ENCODE measurements at regions of chr1 and their contacts with region 1.

Region 1: DNA sequence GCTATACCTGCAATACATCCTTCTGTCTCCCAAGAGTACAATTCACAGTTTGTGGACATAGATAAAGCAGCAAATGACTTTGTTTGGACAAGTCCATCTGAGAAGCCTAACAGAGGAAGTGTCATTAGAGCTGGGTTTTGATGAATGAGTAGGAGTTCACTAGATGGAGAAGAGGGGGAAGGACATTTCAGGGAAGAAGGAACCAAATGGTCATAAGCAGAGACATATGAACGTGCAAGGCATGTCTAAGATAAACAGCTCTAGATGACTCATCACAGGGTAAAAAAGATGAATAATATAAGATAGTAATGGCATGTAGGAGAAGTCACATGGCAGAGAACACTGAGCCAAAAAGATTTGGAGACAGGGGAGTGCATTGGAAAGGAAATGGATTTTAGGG is 54.5 kb downstream of the HMGB4 start:
- DNase-seq: no peak
- ATAC-seq: no peak
- H3K4me3 ChIP-seq: no peak overlapping the region
- H3K4me3 Mint-ChIP-seq: no peak overlapping the region
- H3K27ac ChIP-seq: no peak overlapping the region
- H3K27ac Mint-ChIP-seq: no peak overlapping the region
- H3K4me1 ChIP-seq: no peaks in the 10 kb centered on the region
- H3K4me1 Mint-ChIP-seq: no peaks in the 10 kb centered on the region
- H3K27me3 ChIP-seq: no peaks in the 10 kb centered on the region
- H3K27me3 Mint-ChIP-seq: no peaks in the 10 kb centered on the region
- CTCF ChIP-seq: no peak

Region 2: DNA sequence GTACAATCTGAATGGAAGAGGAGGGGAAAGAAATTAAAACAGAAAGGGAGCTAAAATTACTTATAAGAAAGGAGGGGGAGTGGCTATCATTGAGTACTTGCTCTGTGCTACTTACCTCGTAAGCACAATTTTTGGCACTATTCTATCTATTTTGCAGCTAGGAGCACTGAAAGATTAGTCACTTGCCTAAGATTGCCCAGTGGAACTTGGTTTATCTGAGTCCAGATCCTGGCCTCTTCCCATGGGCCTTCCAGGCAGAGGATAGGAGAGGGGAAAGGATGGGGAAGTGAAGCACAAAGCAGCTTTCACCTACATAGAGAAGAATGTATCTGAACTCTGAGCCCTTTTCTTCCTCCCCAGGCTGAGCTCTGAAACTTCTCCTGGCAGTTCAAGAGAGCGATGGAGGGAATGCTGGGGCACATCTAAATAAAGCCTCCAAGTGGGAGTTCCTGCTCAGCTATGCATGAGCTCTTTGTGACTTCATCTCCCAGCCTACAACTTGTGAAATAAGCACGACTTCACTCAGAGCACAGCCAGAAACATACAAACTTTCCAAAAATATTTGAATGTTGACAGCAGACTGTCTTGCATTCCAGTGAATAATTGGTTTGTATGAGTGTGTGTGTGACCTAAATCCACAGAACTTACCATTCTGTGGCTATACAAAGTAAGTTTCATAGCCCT is 25.1 kb before region 1 on chr1:
- CTCF ChIA-PET with region 1: no interaction called
- POLR2A ChIA-PET with region 1: no interaction called
- intact Hi-C with region 1: no loop called
- DNase-seq: no peak
- ATAC-seq: no peak
- H3K4me3 ChIP-seq: no peak overlapping the region
- H3K4me3 Mint-ChIP-seq: no peak overlapping the region
- H3K27ac ChIP-seq: no peak overlapping the region
- H3K27ac Mint-ChIP-seq: no peak overlapping the region
- H3K4me1 ChIP-seq: no peaks in the 10 kb centered on the region
- H3K4me1 Mint-ChIP-seq: no peaks in the 10 kb centered on the region
- H3K27me3 ChIP-seq: no peaks in the 10 kb centered on the region
- H3K27me3 Mint-ChIP-seq: peaks cover 6% of the 10 kb centered on the region
- CTCF ChIP-seq: no peak

Region 3: DNA sequence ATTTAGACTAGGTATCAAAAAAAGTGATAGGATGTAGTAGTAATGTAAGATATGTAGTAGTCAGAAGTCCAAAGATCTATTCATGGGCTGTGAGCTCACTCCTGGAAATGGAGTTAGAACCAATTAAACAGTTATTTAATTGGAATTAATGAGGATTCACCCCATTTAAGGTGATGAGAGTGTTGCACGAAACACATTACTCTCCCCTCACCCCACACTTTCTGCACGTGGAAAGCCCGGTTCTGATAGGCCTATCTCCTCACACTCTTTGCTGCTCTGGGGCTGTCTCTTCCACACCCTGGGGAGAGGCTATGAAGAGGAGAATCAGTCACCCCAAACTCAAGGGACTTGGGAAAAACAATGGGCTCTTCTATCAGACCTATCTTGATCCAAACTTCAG is 71.9 kb after region 1 on chr1:
- CTCF ChIA-PET with region 1: no interaction called
- POLR2A ChIA-PET with region 1: interaction called, 11 read pairs
- intact Hi-C with region 1: no loop called
- DNase-seq: no peak
- ATAC-seq: no peak
- H3K4me3 ChIP-seq: no peak overlapping the region
- H3K4me3 Mint-ChIP-seq: no peak overlapping the region
- H3K27ac ChIP-seq: no peak overlapping the region
- H3K27ac Mint-ChIP-seq: no peak overlapping the region
- H3K4me1 ChIP-seq: no peaks in the 10 kb centered on the region
- H3K4me1 Mint-ChIP-seq: no peaks in the 10 kb centered on the region
- H3K27me3 ChIP-seq: no peaks in the 10 kb centered on the region
- H3K27me3 Mint-ChIP-seq: peaks cover 18% of the 10 kb centered on the region
- CTCF ChIP-seq: no peak

Region 4: GRCh38 chr1:34188418-34188817 is 270.1 kb after region 1 on chr1:
- CTCF ChIA-PET with region 1: no interaction called
- POLR2A ChIA-PET with region 1: no interaction called
- intact Hi-C with region 1: no loop called
- DNase-seq: no peak
- ATAC-seq: no peak
- H3K4me3 ChIP-seq: no peak overlapping the region
- H3K4me3 Mint-ChIP-seq: no peak overlapping the region
- H3K27ac ChIP-seq: no peak overlapping the region
- H3K27ac Mint-ChIP-seq: no peak overlapping the region
- H3K4me1 ChIP-seq: no peaks in the 10 kb centered on the region
- H3K4me1 Mint-ChIP-seq: no peaks in the 10 kb centered on the region
- H3K27me3 ChIP-seq: peaks cover 0 to 2% (median 0%) of the 10 kb centered on the region in 4 experiments
- H3K27me3 Mint-ChIP-seq: peaks cover 37% of the 10 kb centered on the region
- CTCF ChIP-seq: no peak

Measured in B cell (primary cell).